ENCODE measurements at regions of chr3 and their contacts with region 1.

Region 1: DNA sequence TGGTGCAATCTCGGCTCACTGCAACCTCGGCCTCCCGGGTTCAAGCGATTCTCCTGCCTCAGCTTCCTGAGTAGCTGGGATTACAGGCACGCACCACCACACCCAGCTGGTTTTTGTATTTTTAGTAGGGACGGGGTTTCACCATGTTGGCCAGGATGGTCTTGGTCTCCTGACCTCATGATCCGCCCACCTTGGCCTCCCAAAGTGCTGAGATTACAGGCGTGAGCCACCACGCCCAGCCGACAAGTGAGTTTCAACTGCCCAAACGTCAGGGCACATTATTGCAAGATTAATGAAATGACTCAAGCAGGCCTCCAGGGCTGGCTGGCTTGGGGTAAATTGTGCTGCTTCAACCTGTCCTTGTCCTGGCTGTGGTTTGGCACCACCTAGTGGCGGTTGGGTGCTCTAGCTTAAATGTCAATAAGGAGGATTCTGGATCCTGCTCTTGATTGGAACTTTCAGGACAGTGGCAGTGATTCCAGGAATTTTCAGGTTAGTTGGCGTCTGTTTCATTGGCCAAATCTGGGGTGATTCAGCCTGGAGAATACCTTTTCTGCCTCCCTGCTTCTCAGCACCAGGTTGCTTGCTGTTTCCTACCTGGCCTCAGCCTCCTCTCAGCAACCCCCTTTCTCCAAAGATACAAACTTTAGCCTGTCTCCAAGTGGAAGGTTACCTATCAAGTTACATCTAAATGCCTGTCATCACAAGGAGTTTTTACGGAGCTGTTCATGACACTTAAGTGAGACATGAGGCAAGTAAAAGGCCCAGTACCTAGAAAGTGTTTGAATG is 32.4 kb upstream of the SACM1L start:
- DNase-seq: peak; percentile 93 to 96
- H3K4me3 ChIP-seq: no peak overlapping the region
- H3K27ac ChIP-seq: peak overlapping the region in 2 of 5 donors; percentile 39 to 68
- H3K4me1 ChIP-seq: peaks cover 16 to 67% (median 39%) of the 10 kb centered on the region in 4 donors
- H3K27me3 ChIP-seq: no peaks in the 10 kb centered on the region
- CTCF ChIP-seq: peak in 6 of 7 experiments; percentile 61 to 99 (median 93)
- EP300 ChIP-seq: no peak
- POLR2A ChIP-seq: no peak

Region 2: DNA sequence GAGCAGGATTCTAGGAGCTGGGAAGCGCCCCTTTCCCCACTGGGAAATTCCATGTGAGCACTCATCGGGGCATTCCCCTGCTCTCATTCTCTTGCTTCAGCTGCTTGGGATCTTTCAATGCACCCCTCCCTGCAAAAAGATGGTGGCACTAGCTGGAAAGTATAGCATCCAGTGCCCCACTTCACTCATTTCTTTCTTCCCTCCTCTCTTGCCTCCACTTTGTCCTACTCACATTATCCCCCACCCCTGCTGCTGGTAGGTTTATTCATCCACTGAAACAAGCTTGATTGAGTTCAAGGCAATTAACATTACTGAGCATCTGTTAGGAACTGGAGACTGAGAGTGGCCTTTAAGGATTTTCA is 147.0 kb before region 1 on chr3:
- intact Hi-C with region 1: loop called (anchors 5 kb)
- DNase-seq: no peak
- H3K4me3 ChIP-seq: no peak overlapping the region
- H3K27ac ChIP-seq: peak overlapping the region in 1 of 5 donors; percentile 15
- H3K4me1 ChIP-seq: peaks cover 0 to 10% (median 3%) of the 10 kb centered on the region in 4 donors
- H3K27me3 ChIP-seq: no peaks in the 10 kb centered on the region
- CTCF ChIP-seq: no peak
- EP300 ChIP-seq: no peak
- POLR2A ChIP-seq: no peak

Region 3: DNA sequence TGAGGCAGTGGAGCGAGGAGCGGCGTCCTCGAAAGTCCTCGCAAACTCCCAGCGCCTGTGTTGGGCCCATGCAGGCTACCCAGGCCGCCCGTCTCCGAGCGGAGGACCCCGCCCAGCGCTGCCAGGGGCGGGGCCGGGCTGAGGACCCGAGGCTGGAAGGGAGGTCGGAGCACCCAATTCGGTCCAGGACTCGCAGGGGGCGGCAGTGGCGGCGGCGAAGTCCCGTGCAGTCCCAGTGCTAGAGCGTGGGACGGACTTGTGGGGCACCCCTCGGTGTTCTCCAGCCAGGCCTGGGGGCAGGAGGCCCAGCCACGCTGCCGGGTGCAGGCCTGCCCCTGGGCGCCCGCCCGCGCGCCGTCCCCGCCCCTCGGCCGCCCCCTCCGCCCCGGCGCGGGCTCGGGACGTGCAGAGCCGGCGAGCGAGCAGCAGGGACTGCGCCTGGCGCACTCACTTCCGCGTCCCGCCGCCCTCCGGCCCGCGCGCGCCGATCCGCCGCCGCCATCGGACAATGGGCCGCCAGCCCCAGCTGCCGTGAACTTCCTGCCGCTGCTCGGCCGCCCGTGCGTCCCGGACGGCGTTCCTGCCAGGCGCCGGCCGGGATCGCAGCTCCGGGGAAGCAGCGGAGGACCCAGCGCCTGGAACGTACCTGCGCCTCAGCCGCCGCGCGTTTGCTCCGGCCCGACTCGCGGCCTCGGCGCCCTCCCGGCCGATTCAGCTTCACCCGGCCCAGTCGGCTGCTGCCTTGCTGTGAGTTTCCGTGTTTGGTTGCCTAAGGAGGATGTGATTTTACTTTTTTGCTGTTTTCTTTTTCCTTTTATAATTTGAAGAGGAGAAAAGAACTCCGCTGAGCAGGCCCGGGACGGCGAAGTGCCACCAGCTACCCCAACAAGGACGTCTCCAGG is 62.8 kb before region 1 on chr3:
- intact Hi-C with region 1: loop called (anchors 5 kb)
- DNase-seq: peak; percentile 81 to 93
- H3K4me3 ChIP-seq: peak overlapping the region; percentile 64 to 79 (median 72)
- H3K27ac ChIP-seq: peak overlapping the region; percentile 89 to 96 (median 93)
- H3K4me1 ChIP-seq: peaks cover 52 to 58% (median 56%) of the 10 kb centered on the region in 4 donors
- H3K27me3 ChIP-seq: no peaks in the 10 kb centered on the region
- CTCF ChIP-seq: no peak
- EP300 ChIP-seq: no peak
- POLR2A ChIP-seq: no peak

Measured in stomach (tissue), 19 donors.